Panc1 (cell line): ENCODE measurements at regions of chr10 and their contacts with region 1.

Region 1: DNA sequence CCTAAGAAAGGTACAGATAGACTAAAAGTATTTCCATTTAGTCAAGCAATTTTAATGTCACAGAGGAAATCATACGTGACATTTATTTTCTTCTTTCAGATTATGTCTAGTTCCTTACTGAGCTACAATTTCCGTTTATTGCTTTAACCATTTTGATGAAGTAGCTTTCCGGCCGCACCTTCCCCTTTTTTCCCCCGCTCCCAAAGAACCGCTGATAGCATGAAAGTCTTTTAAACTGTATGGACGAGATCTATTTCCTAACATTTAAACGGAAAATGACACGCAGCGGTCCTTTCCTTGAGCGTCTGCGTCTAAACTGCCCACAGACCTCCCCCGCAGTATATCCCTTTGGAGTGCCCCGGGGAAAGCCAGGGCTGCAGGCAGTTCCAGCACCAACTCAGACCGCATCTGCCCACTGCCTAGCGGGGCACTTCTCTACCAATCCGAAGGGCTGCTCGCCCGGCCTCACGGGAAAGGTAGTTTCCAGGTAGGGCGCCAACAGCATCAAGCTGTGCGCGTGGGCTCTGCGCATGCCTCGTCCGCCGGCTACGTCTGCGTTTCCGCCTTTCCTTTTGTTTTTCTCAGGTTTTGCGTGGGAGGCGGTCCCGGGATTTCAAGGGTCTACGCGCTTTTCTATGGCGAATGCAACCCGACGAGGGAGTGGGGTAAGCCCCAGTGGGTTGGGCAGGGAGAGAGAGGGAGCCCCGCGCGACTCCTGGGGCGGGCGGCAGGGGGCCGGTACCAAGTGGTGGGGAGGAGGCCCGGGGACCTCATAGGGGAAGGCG is at the start of gene ZNF33A:
- DNase-seq: peak; percentile 43
- ATAC-seq: peak; percentile 97
- H3K4me3 ChIP-seq: peak within 1 kb of the TSS; percentile 64 to 81
- H3K27ac ChIP-seq: peak within 1 kb of the TSS; percentile 86
- H3K4me1 ChIP-seq: peaks cover 3% of the 10 kb centered on the region; the same call in 1 of the 2 replicates
- H3K27me3 ChIP-seq: no peaks in the 10 kb centered on the region
- CTCF ChIP-seq: no peak
- total RNA-seq, gene ZNF33A: 16.9 TPM

Region 2: DNA sequence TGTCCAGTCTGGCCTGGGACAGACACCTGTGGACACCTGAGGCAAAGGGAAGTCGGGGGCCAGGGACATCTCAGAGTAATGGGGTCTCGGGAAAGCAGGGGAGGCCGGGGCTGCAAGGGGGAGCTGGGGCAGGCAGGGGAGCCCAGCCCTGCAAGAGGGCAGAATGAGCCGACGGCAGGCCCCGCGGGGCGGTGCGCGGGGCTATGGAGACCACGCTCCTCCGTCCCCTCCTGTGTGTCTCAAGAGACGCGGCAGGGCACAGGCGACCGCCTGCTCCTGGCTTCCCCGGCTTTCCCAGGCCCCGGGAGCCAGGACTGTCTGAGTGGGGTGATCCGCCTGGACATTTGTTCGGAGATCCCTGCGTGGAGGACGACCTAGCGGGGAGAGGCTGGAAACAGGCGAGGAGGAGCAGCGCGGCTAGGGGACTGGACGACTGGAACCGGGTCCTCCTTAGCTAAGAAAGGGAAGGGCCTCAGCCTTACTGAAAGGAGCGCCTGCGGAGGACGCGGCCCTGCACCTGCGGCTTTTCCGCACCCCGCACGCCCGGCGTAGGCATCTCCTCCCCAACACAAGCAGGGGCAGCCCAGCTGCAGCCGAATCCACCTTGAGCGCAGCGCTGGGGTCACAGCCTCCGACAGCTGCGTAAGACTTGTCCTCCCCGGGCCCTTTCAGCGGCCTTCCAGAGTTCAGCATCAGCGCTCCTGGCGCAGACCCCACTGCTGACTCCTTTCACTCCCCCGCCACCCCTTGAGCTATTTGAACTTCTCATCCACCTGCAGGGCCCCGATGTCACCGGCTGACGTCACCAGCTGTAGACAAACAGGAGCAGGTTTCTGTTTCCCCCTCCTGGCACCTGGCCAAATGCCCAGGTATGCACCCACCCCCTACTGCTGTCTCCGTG is 329.3 kb before region 1 on chr10:
- CTCF ChIA-PET with region 1: no interaction called
- POLR2A ChIA-PET with region 1: no interaction called
- in situ Hi-C with region 1: no loop called
- intact Hi-C with region 1: no loop called
- DNase-seq: no peak
- ATAC-seq: no peak
- H3K4me3 ChIP-seq: no peak overlapping the region
- H3K27ac ChIP-seq: no peak overlapping the region
- H3K4me1 ChIP-seq: no peaks in the 10 kb centered on the region
- H3K27me3 ChIP-seq: no peaks in the 10 kb centered on the region
- CTCF ChIP-seq: no peak

Region 3: GRCh38 chr10:37947526-37947925 is 62.8 kb before region 1 on chr10:
- CTCF ChIA-PET with region 1: no interaction called
- POLR2A ChIA-PET with region 1: no interaction called
- in situ Hi-C with region 1: no loop called
- intact Hi-C with region 1: no loop called
- DNase-seq: no peak
- ATAC-seq: no peak
- H3K4me3 ChIP-seq: no peak overlapping the region
- H3K27ac ChIP-seq: no peak overlapping the region
- H3K4me1 ChIP-seq: no peaks in the 10 kb centered on the region
- H3K27me3 ChIP-seq: no peaks in the 10 kb centered on the region
- CTCF ChIP-seq: no peak

Region 4: GRCh38 chr10:38112159-38112558 is 101.8 kb after region 1 on chr10:
- CTCF ChIA-PET with region 1: no interaction called
- POLR2A ChIA-PET with region 1: interaction called, 10 read pairs
- in situ Hi-C with region 1: no loop called
- intact Hi-C with region 1: no loop called
- DNase-seq: no peak
- ATAC-seq: no peak
- H3K4me3 ChIP-seq: no peak overlapping the region
- H3K27ac ChIP-seq: no peak overlapping the region
- H3K4me1 ChIP-seq: no peaks in the 10 kb centered on the region
- H3K27me3 ChIP-seq: no peaks in the 10 kb centered on the region
- CTCF ChIP-seq: no peak

Region 5: DNA sequence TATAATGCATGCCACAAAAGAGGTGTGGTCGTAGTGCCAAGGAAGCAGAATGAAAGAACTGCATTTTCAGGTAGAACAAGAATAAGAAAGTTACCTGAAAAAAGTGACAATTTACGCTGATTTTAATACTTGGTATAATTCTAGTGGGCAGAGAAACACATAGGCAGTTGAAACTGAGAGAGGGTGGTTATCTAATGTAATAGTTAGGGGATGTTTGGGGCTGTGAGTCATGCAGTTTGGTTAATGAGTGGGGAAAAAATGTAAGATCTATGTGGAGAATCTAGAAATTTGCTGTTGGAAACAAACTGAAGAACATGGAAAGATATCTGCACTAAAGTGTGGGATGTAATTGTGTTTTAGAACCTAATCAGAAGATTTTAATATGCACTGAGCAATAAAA is 117.5 kb after region 1 on chr10:
- CTCF ChIA-PET with region 1: no interaction called
- POLR2A ChIA-PET with region 1: no interaction called
- in situ Hi-C with region 1: no loop called
- intact Hi-C with region 1: no loop called
- DNase-seq: no peak
- ATAC-seq: no peak
- H3K4me3 ChIP-seq: no peak overlapping the region
- H3K27ac ChIP-seq: no peak overlapping the region
- H3K4me1 ChIP-seq: no peaks in the 10 kb centered on the region
- H3K27me3 ChIP-seq: no peaks in the 10 kb centered on the region
- CTCF ChIP-seq: no peak